Activated CD4-positive, alpha-beta T cell treated with anti-CD3 and anti-CD28 coated beads for 36 hours (primary cell): ENCODE measurements at regions of chr2 and their contacts with region 1.

Region 1: GRCh38 chr2:113756355-113757137 is at the start of gene SLC35F5:
- DNase-seq: peak; percentile 96
- ATAC-seq: peak; percentile 89
- H3K4me3 Mint-ChIP-seq: peak within 1 kb of the TSS; percentile 89
- H3K27ac Mint-ChIP-seq: peak within 1 kb of the TSS; percentile 99
- H3K4me1 Mint-ChIP-seq: peaks cover 13% of the 10 kb centered on the region
- H3K27me3 Mint-ChIP-seq: no peaks in the 10 kb centered on the region
- total RNA-seq, gene SLC35F5: 13.4 to 18.4 TPM

Region 2: DNA sequence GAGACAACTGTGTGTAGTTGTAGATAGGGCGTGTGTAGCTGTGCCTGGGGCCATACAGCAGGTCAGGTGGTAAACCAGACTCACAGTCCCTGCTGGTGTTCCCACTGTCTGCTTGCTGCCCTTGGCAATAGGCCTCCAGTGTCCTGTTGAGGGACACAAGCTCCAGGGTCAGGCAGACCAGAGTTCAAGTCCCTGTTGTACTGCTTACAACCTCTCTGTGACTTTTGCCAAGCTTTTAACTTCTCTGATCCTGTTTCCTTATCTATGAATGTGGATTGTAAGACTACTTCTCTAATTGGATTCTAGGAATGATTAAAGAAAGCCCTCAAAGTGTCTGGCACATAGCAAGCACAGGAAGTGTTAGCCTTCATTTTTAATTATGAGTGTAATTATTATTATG is 1789.5 kb before region 1 on chr2:
- CTCF ChIA-PET with region 1: no interaction called
- POLR2A ChIA-PET with region 1: no interaction called
- intact Hi-C with region 1: no loop called
- DNase-seq: no peak
- ATAC-seq: no peak
- H3K4me3 Mint-ChIP-seq: no peak overlapping the region
- H3K27ac Mint-ChIP-seq: no peak overlapping the region
- H3K4me1 Mint-ChIP-seq: no peaks in the 10 kb centered on the region
- H3K27me3 Mint-ChIP-seq: peaks cover 2% of the 10 kb centered on the region

Region 3: DNA sequence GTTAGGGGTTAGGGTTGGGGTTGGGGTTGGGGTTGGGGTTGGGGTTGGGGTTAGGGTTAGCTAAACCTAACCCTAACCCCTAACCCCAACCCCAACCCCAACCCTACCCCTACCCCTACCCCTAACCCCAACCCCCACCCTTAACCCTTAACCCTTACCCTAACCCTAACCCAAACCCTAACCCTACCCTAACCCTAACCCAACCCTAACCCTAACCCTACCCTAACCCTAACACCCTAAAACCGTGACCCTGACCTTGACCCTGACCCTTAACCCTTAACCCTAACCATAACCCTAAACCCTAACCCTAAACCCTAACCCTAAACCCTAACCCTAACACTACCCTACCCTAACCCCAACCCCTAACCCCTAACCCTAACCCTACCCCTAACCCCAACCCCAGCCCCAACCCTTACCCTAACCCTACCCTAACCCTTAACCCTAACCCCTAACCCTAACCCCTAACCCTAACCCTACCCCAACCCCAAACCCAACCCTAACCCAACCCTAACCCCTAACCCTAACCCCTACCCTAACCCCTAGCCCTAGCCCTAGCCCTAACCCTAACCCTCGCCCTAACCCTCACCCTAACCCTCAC is 153.6 kb before region 1 on chr2:
- CTCF ChIA-PET with region 1: no interaction called
- POLR2A ChIA-PET with region 1: no interaction called
- intact Hi-C with region 1: loop called in 1 of 2 experiments (anchors 1 kb)
- DNase-seq: peak; percentile 6
- ATAC-seq: peak; percentile 47
- H3K4me3 Mint-ChIP-seq: peak overlapping the region; percentile 82
- H3K27ac Mint-ChIP-seq: peak overlapping the region; percentile 90
- H3K4me1 Mint-ChIP-seq: peaks cover 7% of the 10 kb centered on the region
- H3K27me3 Mint-ChIP-seq: no peaks in the 10 kb centered on the region

Region 4: DNA sequence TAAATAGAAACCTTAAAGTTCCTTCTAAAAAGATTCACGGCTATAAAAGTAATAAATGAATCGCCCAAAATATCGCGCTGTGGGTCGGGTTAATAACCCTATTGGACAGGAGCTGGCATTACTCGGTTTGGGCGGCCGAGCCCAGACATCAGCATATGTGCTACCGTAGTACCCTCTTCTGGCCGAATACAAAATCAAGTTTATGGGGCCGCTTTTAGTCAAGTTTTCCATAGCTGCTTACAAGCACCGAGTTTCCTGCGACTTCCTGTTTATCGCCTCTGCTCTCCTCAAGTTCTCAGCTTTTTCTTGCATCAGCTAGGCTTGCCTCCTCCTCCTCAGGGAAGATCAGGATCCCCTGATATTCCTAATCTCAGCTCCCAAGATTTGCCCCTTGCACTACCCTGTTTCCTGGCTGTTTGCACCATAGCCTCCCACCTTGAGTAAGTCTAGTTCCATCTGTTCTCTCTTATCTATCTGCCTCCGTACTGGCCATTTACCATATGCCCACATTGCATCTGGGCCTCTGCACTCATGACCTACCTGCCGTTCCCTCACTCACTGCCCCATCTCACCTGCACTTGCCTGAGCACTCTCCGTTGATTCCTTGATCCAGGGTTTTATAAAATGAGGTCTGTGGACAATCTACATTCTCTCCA is 56.2 kb before region 1 on chr2:
- CTCF ChIA-PET with region 1: interaction called, 5 read pairs
- POLR2A ChIA-PET with region 1: no interaction called
- intact Hi-C with region 1: loop called in 1 of 2 experiments (anchors 2 kb)
- DNase-seq: peak; percentile 72
- ATAC-seq: peak; percentile 78
- H3K4me3 Mint-ChIP-seq: peak overlapping the region; percentile 39
- H3K27ac Mint-ChIP-seq: peak overlapping the region; percentile 87
- H3K4me1 Mint-ChIP-seq: peaks cover 29% of the 10 kb centered on the region
- H3K27me3 Mint-ChIP-seq: no peaks in the 10 kb centered on the region

Region 5: GRCh38 chr2:113848758-113849415 is 92.3 kb after region 1 on chr2:
- CTCF ChIA-PET with region 1: no interaction called
- POLR2A ChIA-PET with region 1: no interaction called
- intact Hi-C with region 1: loop called (anchors 1 to 10 kb)
- DNase-seq: peak; percentile 66
- ATAC-seq: peak; percentile 99
- H3K4me3 Mint-ChIP-seq: no peak overlapping the region
- H3K27ac Mint-ChIP-seq: peak overlapping the region; percentile 85
- H3K4me1 Mint-ChIP-seq: peaks cover 16% of the 10 kb centered on the region
- H3K27me3 Mint-ChIP-seq: no peaks in the 10 kb centered on the region

Region 6: DNA sequence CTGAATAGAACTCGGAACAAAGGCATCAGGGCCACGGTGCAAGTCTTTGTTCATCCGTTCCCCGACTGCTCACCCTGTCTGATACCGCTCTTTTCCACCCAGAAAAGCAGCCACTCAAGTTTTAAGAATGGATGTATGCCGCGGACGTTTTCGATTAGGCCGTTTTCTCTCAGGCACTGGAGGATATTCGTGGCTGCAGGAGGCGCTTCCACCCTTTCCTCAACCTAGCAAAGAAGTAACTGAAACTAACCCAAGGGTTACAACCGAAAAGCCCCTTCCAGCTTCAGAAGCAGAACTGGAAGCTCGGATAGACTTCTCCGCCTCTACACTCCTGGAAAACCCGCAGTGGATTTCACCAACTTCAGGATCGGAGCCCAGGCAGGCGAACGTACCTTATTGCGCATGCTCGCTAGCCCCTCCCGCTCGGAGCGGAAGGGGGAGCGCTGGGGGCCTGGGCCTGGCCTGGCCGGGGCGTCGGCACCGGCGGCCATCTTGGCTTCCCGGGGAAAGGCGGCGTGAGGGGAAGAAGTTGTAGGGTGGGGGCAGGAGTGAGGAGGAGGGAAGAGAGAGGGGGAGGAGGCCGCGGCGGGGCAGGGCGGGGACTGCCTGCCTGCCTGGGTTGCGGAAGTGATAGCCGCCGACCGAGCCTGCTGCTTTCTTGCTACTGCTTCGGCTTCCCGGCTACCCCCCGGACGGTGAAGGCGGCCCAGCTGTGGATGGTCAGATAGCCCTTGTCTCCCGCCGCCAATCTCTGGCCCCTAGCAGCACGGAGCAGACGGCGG is 133.1 kb after region 1 on chr2 and contains the start of gene ACTR3:
- CTCF ChIA-PET with region 1: interaction called, 3 read pairs
- POLR2A ChIA-PET with region 1: interaction called, 21 read pairs
- intact Hi-C with region 1: loop called (anchors 1 kb)
- DNase-seq: peak; percentile 99
- ATAC-seq: peak; percentile 79
- H3K4me3 Mint-ChIP-seq: peak within 1 kb of the TSS; percentile 94
- H3K27ac Mint-ChIP-seq: peak within 1 kb of the TSS; percentile 99
- H3K4me1 Mint-ChIP-seq: peaks cover 67% of the 10 kb centered on the region
- H3K27me3 Mint-ChIP-seq: no peaks in the 10 kb centered on the region
- total RNA-seq, gene ACTR3: 495 to 583 TPM

Region 7: GRCh38 chr2:113977660-113978523 is 221.3 kb after region 1 on chr2:
- CTCF ChIA-PET with region 1: interaction called, 10 read pairs
- POLR2A ChIA-PET with region 1: no interaction called
- intact Hi-C with region 1: loop called (anchors 2 to 10 kb)
- DNase-seq: peak; percentile 12
- ATAC-seq: no peak
- H3K4me3 Mint-ChIP-seq: no peak overlapping the region
- H3K27ac Mint-ChIP-seq: no peak overlapping the region
- H3K4me1 Mint-ChIP-seq: peaks cover 5% of the 10 kb centered on the region
- H3K27me3 Mint-ChIP-seq: no peaks in the 10 kb centered on the region

Region 8: GRCh38 chr2:114139542-114139941 is 383.0 kb after region 1 on chr2:
- CTCF ChIA-PET with region 1: no interaction called
- POLR2A ChIA-PET with region 1: no interaction called
- intact Hi-C with region 1: no loop called
- DNase-seq: no peak
- ATAC-seq: no peak
- H3K4me3 Mint-ChIP-seq: no peak overlapping the region
- H3K27ac Mint-ChIP-seq: no peak overlapping the region
- H3K4me1 Mint-ChIP-seq: no peaks in the 10 kb centered on the region
- H3K27me3 Mint-ChIP-seq: peaks cover 5% of the 10 kb centered on the region

Region 9: GRCh38 chr2:114368705-114369104 is 612.2 kb after region 1 on chr2:
- CTCF ChIA-PET with region 1: no interaction called
- POLR2A ChIA-PET with region 1: no interaction called
- intact Hi-C with region 1: no loop called
- DNase-seq: no peak
- ATAC-seq: no peak
- H3K4me3 Mint-ChIP-seq: no peak overlapping the region
- H3K27ac Mint-ChIP-seq: no peak overlapping the region
- H3K4me1 Mint-ChIP-seq: no peaks in the 10 kb centered on the region
- H3K27me3 Mint-ChIP-seq: no peaks in the 10 kb centered on the region

Region 10: DNA sequence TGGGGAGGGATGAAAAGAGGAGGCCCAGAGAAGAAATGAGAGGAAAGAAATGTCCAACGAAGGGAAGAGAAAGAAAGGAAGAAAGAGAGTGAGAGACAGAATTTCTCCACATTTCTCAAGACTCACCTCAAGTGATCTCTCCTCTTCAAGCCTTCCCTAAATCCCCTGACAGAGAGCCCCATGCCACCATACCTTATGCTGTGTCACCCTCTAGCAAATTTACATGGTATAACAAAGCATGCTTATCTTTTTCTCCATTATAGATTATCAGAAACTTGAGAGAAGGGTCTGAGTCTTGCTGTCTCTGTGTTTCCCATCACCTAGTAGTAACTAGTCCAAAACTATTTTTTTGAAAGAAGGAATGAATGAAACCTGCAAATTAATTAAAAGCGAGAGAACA is 1894.3 kb after region 1 on chr2:
- CTCF ChIA-PET with region 1: no interaction called
- POLR2A ChIA-PET with region 1: no interaction called
- intact Hi-C with region 1: no loop called
- DNase-seq: no peak
- ATAC-seq: no peak
- H3K4me3 Mint-ChIP-seq: no peak overlapping the region
- H3K27ac Mint-ChIP-seq: no peak overlapping the region
- H3K4me1 Mint-ChIP-seq: no peaks in the 10 kb centered on the region
- H3K27me3 Mint-ChIP-seq: no peaks in the 10 kb centered on the region